CD14-positive monocyte (primary cell): ENCODE measurements at regions of chr1 and their contacts with region 1.

Region 1: DNA sequence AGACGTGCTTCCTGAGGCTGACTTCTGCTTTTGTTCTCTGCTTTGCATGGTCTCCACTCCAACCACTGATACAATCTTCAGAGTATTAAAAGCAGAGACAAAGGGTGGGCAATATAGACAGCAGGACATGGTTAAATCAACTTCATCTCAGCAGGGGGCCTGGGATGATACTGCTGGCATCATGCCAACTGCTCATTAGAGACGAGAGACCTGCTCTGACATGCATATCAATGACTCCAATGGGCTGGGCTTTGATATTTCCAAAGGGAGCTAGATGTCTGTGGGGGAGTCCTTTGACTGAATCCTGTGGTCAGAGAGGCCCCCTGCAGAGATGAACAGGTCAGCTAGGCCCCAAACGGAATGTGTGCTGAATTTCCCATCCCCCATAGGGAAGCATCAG is 106.6 kb downstream of the ACTL8 start:
- DNase-seq: no peak
- H3K4me3 ChIP-seq: no peak overlapping the region
- H3K4me3 Mint-ChIP-seq: no peak overlapping the region
- H3K27ac ChIP-seq: no peak overlapping the region
- H3K27ac Mint-ChIP-seq: no peak overlapping the region
- H3K4me1 ChIP-seq: no peaks in the 10 kb centered on the region
- H3K4me1 Mint-ChIP-seq: no peaks in the 10 kb centered on the region
- H3K27me3 ChIP-seq: no peaks in the 10 kb centered on the region
- H3K27me3 Mint-ChIP-seq: peaks cover 0 to 14% (median 7%) of the 10 kb centered on the region in 3 donors
- CTCF ChIP-seq: no peak

Region 2: GRCh38 chr1:17795836-17796645 is 65.6 kb before region 1 on chr1:
- intact Hi-C with region 1: no loop called
- DNase-seq: no peak
- H3K4me3 ChIP-seq: no peak overlapping the region
- H3K4me3 Mint-ChIP-seq: no peak overlapping the region
- H3K27ac ChIP-seq: no peak overlapping the region
- H3K27ac Mint-ChIP-seq: no peak overlapping the region
- H3K4me1 ChIP-seq: peaks cover 3% of the 10 kb centered on the region in 2 donors
- H3K4me1 Mint-ChIP-seq: peaks cover 8% of the 10 kb centered on the region
- H3K27me3 ChIP-seq: peaks cover 0 to 3% of the 10 kb centered on the region in 2 donors
- H3K27me3 Mint-ChIP-seq: peaks cover 15 to 19% (median 17%) of the 10 kb centered on the region in 3 donors
- CTCF ChIP-seq: no peak

Region 3: DNA sequence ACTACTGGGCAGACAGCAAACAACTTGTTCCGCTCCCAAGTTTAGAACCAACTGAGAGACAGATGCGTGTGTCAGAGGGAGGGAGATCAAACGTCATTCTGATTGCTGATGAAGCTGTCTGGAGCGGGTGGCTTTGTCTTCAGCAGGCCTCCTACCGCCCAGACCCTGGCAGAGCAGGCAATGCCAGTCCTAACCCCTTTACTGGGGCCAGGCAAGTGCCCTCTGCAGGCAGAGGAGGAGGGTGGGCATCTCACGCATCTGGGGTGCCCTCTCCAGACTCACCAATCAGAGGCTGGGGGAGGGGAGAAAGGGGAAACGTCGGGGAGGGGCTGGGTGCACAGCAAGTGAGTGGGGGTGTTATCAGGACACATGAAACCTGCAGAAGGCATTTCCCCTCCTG is 20.1 kb after region 1 on chr1:
- intact Hi-C with region 1: loop called in 1 of 2 experiments (anchors 2 kb)
- DNase-seq: no peak
- H3K4me3 ChIP-seq: no peak overlapping the region
- H3K4me3 Mint-ChIP-seq: no peak overlapping the region
- H3K27ac ChIP-seq: no peak overlapping the region
- H3K27ac Mint-ChIP-seq: no peak overlapping the region
- H3K4me1 ChIP-seq: no peaks in the 10 kb centered on the region
- H3K4me1 Mint-ChIP-seq: no peaks in the 10 kb centered on the region
- H3K27me3 ChIP-seq: no peaks in the 10 kb centered on the region
- H3K27me3 Mint-ChIP-seq: peaks cover 0 to 21% (median 4%) of the 10 kb centered on the region in 3 donors
- CTCF ChIP-seq: no peak